ENCODE measurements at regions of chr20 and their contacts with region 1.

Region 1: DNA sequence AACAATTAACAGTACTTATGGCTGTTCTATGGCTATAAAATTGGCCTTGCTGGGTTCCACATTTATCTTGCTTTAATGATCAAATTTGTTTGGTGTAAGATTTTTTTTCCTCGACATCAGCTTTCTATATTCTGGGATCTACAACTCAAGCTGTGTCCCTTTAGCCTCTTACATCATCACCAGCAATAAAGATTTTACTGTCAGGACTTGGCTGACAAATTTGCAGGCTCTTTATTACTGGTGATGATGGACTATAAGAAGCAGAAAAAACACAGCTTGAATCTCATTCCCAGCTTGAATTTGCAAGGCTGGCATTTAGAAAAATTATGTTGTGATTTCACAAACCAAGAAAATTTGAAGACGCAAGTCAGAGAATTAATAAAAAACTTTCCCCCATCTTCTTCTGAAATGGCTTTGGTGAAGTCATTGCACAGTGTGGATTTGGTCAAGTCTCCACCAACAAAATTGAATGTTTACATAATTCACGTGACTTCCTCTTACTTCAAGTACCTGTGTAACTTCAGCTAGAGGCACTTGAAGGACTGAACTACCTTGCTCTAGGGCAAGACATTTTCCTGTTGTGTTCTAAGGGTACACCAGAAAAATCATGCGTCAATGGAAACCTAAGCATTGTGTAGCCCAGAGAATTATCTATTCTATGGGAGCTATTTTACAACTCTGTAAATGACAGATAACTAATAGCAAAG is 175.0 kb downstream of the CBLN4 start:
- DNase-seq: no peak
- H3K4me3 ChIP-seq: no peak overlapping the region
- H3K27ac ChIP-seq: no peak overlapping the region
- H3K27me3 ChIP-seq: peaks cover 0 to 2% (median 0%) of the 10 kb centered on the region in 45 donors
- CTCF ChIP-seq: no peak

Region 2: GRCh38 chr20:55295046-55295445 is 535.2 kb before region 1 on chr20:
- intact Hi-C with region 1: loop called in 1 of 2 experiments (anchors 5 kb)
- DNase-seq: no peak
- H3K4me3 ChIP-seq: no peak overlapping the region
- H3K27ac ChIP-seq: no peak overlapping the region
- H3K27me3 ChIP-seq: peaks cover 0 to 5% (median 0%) of the 10 kb centered on the region in 45 donors
- CTCF ChIP-seq: no peak

Region 3: DNA sequence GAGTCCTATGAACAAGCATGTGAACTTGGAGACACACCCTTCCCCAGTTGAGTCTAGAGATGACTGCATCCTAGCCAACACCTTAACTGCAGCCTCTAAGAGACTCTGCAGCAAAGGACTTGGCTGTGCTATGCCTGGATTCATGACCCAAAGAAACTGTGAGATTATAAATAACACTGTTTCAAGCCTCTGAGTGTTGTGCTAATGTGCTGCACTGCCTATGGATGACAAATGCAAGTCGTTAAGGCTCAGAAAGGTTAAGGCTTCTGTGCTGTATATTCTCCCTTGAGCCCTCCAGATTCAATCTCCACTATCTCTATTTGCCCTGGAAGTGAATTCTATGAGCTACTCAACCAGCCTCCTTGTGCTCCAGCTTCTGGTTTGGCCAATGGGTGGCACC is 291.6 kb after region 1 on chr20:
- intact Hi-C with region 1: no loop called
- DNase-seq: no peak
- H3K4me3 ChIP-seq: no peak overlapping the region
- H3K27ac ChIP-seq: no peak overlapping the region
- H3K27me3 ChIP-seq: peaks cover 0 to 8% (median 0%) of the 10 kb centered on the region in 45 donors
- CTCF ChIP-seq: no peak

Measured in dorsolateral prefrontal cortex (tissue), 120 donors.